Cardiac septum (tissue), 1 donor: ENCODE measurements at regions of chr3 and their contacts with region 1.

Region 1: GRCh38 chr3:15108082-15108545 is 9.2 kb upstream of the RBSN start:
- DNase-seq: peak; percentile 90

Region 2: GRCh38 chr3:15174953-15175352 is 66.8 kb after region 1 on chr3:
- intact Hi-C with region 1: loop called (anchors 5 kb)
- DNase-seq: peak; percentile 74

Region 3: GRCh38 chr3:15205934-15206661 is 98.0 kb after region 1 on chr3 and contains the start of gene CAPN7:
- intact Hi-C with region 1: loop called (anchors 5 kb)
- DNase-seq: peak; percentile 98
- total RNA-seq, gene CAPN7: 29.2 TPM